CD4-positive, alpha-beta T cell (primary cell): ENCODE measurements at regions of chr19 and their contacts with region 1.

Region 1: GRCh38 chr19:13117772-13118423 is at the start of gene NACC1:
- DNase-seq: peak; percentile 77 to 94 (median 87)
- ATAC-seq: peak; percentile 79
- H3K4me3 ChIP-seq: peak within 1 kb of the TSS; percentile 99
- H3K4me3 Mint-ChIP-seq: peak within 1 kb of the TSS; percentile 96
- H3K27ac ChIP-seq: peak within 1 kb of the TSS in 1 of 2 donors; percentile 48
- H3K27ac Mint-ChIP-seq: peak within 1 kb of the TSS; percentile 73
- H3K4me1 ChIP-seq: peaks cover 61% of the 10 kb centered on the region
- H3K4me1 Mint-ChIP-seq: peaks cover 66% of the 10 kb centered on the region
- H3K27me3 ChIP-seq: no peaks in the 10 kb centered on the region
- H3K27me3 Mint-ChIP-seq: no peaks in the 10 kb centered on the region
- CTCF ChIP-seq: no peak
- total RNA-seq, gene NACC1: 13.0 to 13.5 TPM

Region 2: DNA sequence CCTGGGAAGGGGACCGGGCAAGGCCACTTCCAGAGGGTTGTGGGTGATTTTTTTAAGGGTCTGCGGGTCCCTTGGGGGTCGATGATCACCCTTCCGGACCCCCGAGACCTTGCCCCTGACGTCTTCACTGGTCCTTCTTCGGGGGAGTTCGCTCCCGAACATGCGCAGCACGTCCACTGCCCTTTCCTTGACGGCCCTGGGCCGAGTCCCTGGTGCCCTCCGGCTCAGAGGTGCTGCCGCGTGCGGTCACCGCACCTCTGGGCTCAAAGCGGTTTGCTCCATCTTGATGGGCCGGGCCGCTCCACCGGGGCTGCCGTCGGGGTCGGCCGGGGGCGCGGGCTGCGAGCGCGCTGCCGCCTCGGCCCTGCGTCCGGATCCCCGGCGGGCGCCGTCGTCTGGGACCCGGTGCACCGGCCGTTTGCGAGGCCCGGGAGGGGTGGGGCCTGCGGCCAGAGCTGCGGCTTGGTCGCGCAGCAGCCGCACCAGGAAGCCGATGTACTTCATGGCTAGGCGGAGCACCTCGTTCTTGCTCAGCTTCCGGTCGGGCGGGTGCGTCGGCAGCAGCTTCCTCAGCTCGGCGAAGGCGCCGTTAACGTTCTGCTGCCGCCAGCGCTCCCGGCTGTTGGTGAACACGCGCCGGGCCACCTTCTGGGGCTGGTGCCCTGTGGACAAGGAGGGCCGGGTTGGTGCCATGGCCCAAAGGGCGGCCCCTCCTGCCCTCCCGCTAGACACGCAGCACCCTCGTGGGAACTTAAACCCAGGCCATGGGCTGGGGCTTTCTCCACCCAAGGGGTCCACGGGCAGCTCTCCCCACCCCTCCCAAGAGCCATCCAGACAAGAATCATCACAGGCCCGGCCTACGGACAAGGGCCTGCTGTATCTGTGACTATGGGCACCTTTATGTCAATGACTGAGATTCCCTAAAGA is 18.6 kb before region 1 on chr19:
- CTCF ChIA-PET with region 1: interaction called, 13 read pairs
- POLR2A ChIA-PET with region 1: interaction called, 32 read pairs
- intact Hi-C with region 1: loop called in 1 of 2 experiments (anchors 2 kb)
- DNase-seq: peak; percentile 68 to 93 (median 80)
- ATAC-seq: peak; percentile 70
- H3K4me3 ChIP-seq: peak overlapping the region; percentile 59
- H3K4me3 Mint-ChIP-seq: peak overlapping the region; percentile 85
- H3K27ac ChIP-seq: peak overlapping the region; percentile 87 to 89
- H3K27ac Mint-ChIP-seq: peak overlapping the region; percentile 91
- H3K4me1 ChIP-seq: peaks cover 99% of the 10 kb centered on the region
- H3K4me1 Mint-ChIP-seq: peaks cover 62% of the 10 kb centered on the region
- H3K27me3 ChIP-seq: peaks cover 23% of the 10 kb centered on the region in 2 experiments
- H3K27me3 Mint-ChIP-seq: peaks cover 26% of the 10 kb centered on the region
- CTCF ChIP-seq: no peak

Region 3: DNA sequence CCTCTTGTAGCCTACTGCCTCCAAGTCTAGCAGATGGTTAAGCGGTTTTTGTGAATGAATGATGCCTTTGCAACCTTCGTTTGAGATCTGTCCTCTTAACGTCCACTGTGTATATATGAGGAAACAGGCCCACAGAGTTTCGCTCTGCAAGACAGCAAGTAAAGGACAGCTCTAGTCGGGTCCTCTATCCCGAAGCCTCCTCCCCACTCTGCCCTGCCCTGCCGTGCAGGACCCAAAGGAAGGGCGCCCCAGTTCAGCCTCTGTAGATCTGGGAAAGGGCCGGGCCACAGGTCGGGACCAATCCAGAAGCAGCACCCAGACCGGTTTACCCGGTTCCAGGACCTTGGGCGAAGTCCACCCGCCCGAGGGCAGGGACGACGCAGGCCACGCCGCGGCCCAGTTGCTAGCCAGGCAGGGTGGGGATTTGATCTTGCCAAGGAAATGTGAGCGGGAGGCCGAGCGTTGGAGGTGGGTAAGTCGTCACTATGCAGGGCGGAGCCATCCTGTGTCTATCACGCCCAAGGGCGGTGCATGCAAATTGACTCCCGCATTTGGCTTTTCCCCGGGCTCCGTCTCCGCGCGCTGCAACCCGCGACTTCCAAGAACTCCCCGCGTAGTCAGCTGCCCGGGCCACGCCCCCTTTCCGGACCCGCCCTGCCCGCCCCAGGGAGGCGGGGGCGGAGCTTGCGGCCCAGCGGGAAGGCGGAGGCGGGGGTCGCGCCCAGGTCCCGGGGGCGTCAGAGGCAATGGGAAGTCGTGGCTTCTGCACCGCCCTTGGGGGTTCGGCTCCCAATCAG is 44.8 kb after region 1 on chr19:
- CTCF ChIA-PET with region 1: interaction called, 3 read pairs
- POLR2A ChIA-PET with region 1: interaction called, 15 read pairs
- intact Hi-C with region 1: no loop called
- DNase-seq: peak; percentile 50 to 93 (median 80)
- ATAC-seq: peak; percentile 56
- H3K4me3 ChIP-seq: peak overlapping the region; percentile 60
- H3K4me3 Mint-ChIP-seq: peak overlapping the region; percentile 86
- H3K27ac ChIP-seq: peak overlapping the region; percentile 87 to 89
- H3K27ac Mint-ChIP-seq: peak overlapping the region; percentile 99
- H3K4me1 ChIP-seq: peaks cover 96% of the 10 kb centered on the region
- H3K4me1 Mint-ChIP-seq: peaks cover 71% of the 10 kb centered on the region
- H3K27me3 ChIP-seq: no peaks in the 10 kb centered on the region
- H3K27me3 Mint-ChIP-seq: no peaks in the 10 kb centered on the region
- CTCF ChIP-seq: no peak